Gastrocnemius medialis (tissue), 4 donors: ENCODE measurements at regions of chr22 and their contacts with region 1.

Region 1: DNA sequence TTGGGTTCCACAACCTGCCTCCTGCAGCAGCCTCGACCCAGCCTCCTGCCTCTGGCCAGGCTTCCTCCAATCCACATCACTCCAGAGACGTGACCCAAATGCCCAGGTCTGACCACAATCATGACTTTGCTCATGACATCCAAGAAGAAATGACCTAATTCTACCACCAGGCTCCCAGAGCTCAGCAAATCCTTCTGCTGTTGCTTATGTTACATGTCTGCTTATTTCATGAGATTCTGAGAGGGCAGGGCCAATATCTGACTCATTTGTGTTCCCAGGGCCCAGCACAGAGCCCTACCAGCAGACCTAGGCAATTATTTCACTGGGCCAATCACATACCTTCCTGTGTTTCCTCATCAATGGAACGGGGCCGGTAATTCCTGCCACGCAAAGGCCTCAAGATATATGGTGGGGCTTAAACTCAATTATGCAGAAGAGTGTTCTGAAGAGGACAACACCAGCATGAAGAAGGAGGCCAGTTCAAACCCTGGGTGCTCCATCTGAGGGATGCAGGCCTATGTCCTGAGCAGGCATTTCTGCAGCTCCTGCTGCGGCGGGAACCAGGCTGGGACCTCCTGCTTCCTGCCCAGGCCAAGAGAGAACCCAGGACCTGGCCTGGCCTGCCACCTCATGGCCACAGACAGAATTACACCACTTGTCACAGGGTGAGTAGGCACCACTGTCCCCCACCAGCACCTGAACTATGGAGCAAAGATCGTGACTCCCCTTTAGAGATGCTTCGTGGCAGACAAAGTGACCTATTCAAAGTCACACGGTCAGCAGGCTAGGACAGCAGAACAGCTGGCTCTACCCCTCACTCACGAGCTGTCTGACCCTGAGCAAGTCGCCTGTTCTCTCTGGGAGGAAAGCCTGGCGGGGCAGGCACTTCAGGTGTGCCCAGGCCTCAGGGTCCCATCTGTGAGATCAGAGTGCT is 5.9 kb downstream of the CENPM start:
- DNase-seq: peak; percentile 61 to 81
- ATAC-seq: peak; percentile 63 to 79
- H3K4me3 ChIP-seq: no peak overlapping the region
- H3K27ac ChIP-seq: peak overlapping the region in 3 of 4 donors; percentile 29 to 57 (median 39)
- H3K4me1 ChIP-seq: peaks cover 3 to 33% of the 10 kb centered on the region in 2 donors
- H3K27me3 ChIP-seq: no peaks in the 10 kb centered on the region
- CTCF ChIP-seq: peak; percentile 94 to 98 (median 97)
- POLR2A ChIP-seq: no peak

Region 2: DNA sequence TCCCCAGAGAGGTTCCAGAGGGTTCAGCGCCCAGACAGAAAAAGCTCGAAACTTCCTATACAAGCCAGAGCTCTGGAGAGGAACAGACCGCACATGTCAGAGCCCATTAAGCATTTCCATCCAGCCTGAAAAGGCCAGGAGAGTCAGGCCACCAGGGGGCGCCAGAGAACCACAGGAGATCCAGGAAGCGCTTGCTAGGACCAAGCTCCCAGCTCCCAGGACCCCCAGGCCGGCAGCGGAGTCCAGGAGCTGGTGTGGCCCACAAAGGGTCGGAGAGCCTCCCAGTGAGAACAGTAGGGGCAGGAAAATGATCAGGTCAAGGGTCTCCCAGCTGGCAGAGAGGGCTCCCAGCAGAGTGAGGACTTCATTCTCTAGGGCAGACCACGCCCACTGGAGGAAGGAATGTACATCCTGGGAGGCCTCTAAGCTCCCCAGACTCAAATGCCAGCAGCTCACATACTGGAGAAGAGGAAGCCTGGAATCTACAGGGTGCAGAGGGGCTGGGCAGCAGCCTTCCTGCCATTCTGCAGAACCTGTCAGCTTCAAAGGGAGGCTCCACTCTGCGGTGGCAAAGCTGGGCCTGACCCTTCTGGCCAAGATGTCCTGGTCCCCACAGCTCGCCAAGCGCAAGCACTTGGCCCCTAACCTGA is 243.8 kb before region 1 on chr22:
- in situ Hi-C with region 1: loop called (anchors 5 to 10 kb)
- intact Hi-C with region 1: loop called (anchors 1 kb)
- DNase-seq: peak; percentile 58 to 78
- ATAC-seq: peak; percentile 80 to 86
- H3K4me3 ChIP-seq: peak overlapping the region in 2 of 4 donors; percentile 14 to 30
- H3K27ac ChIP-seq: peak overlapping the region in 2 of 4 donors; percentile 41 to 56
- H3K4me1 ChIP-seq: peaks cover 4% of the 10 kb centered on the region in 2 donors
- H3K27me3 ChIP-seq: no peaks in the 10 kb centered on the region
- CTCF ChIP-seq: peak; percentile 84 to 99 (median 95)
- POLR2A ChIP-seq: no peak

Region 3: GRCh38 chr22:41746567-41747400 is 194.3 kb before region 1 on chr22:
- in situ Hi-C with region 1: no loop called
- intact Hi-C with region 1: loop called (anchors 1 kb)
- DNase-seq: peak; percentile 49 to 67
- ATAC-seq: peak; percentile 82 to 97
- H3K4me3 ChIP-seq: no peak overlapping the region
- H3K27ac ChIP-seq: no peak overlapping the region
- H3K4me1 ChIP-seq: no peaks in the 10 kb centered on the region
- H3K27me3 ChIP-seq: no peaks in the 10 kb centered on the region
- CTCF ChIP-seq: peak; percentile 47 to 76 (median 65)
- POLR2A ChIP-seq: no peak

Region 4: GRCh38 chr22:41822317-41823060 is 118.6 kb before region 1 on chr22:
- in situ Hi-C with region 1: loop called in 3 of 4 experiments (anchors 5 to 10 kb)
- intact Hi-C with region 1: loop called (anchors 1 kb)
- DNase-seq: no peak
- ATAC-seq: peak in 1 of 2 donors; percentile 41
- H3K4me3 ChIP-seq: no peak overlapping the region
- H3K27ac ChIP-seq: no peak overlapping the region
- H3K4me1 ChIP-seq: peaks cover 22 to 24% of the 10 kb centered on the region in 2 donors
- H3K27me3 ChIP-seq: no peaks in the 10 kb centered on the region
- CTCF ChIP-seq: peak; percentile 50 to 72 (median 65)
- POLR2A ChIP-seq: no peak

Region 5: DNA sequence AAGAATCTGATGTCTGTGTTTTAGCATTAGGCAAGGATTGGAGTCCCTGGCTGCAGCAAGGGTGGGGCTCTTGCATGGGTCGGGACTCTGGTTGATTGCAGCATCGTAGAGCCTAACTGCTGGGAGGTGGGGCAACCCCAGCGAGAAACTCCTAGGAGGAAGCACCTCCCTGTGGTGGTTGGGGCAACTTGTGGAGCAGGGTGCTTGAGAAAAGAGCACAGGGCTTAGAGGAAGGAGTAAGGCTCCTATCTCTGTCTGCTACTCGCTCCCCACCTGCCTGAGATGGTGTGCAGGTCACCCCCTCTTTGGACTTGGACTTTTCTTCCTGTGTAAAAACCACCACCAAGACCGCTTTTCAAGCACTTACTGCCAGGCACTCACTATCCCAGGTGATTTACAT is 92.6 kb before region 1 on chr22:
- in situ Hi-C with region 1: no loop called
- intact Hi-C with region 1: no loop called
- DNase-seq: peak in 1 of 2 donors; percentile 46
- ATAC-seq: no peak
- H3K4me3 ChIP-seq: no peak overlapping the region
- H3K27ac ChIP-seq: no peak overlapping the region
- H3K4me1 ChIP-seq: peaks cover 18 to 21% of the 10 kb centered on the region in 2 donors
- H3K27me3 ChIP-seq: no peaks in the 10 kb centered on the region
- CTCF ChIP-seq: no peak
- POLR2A ChIP-seq: no peak

Region 6: DNA sequence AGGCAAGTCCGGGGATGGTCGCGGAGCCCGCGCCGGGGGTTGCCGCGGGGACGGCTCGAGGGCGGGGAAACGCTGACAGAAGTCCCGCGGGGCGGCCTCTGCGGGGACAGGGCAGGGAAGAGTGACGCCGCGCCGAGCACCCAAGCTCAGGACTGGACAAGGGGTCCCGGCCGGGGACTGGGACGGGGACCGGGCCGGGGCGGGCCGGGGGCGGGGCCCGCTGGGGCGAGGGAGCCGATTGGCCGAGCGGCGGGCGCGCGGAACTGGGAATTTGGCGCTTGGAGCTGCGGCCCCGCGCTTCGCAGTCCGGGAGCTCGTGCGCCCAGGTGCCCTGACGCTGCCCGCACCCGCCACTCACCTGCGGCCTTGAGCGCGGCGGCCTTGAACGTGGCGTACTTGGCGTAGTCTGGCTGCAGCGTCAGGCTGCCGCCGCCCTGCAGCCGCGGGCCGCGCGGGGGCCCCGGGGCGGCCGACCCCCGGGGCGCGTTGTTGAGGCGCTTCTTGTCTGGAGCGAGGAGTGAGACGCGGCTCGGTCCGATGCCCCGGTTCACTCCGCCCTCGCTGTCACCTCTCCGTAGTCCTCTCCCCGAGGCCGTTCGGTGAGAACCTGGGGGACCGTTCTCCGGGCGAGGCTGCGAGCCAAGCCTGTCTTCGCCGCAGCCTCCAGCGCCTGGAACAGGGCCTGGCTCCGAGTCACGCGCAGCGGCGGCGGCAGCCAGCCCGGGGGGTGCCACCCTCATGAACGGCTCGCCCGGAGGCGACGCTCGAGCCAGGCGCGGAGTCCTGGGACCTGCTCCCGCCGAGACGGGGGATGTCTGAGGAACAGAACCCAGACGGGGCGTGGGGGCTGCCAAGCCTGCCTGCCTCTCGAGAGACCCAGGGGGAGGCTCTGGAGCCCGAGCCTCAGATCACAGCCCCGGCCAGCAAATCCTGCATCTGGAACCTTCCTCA is 30.8 kb before region 1 on chr22:
- in situ Hi-C with region 1: no loop called
- intact Hi-C with region 1: no loop called
- DNase-seq: peak; percentile 29 to 51
- ATAC-seq: peak; percentile 56 to 60
- H3K4me3 ChIP-seq: peak overlapping the region; percentile 23 to 49 (median 44)
- H3K27ac ChIP-seq: peak overlapping the region in 1 of 4 donors; percentile 20
- H3K4me1 ChIP-seq: peaks cover 5 to 15% of the 10 kb centered on the region in 2 donors
- H3K27me3 ChIP-seq: peaks cover 38 to 41% (median 39%) of the 10 kb centered on the region in 3 donors
- CTCF ChIP-seq: no peak
- POLR2A ChIP-seq: no peak